ENCODE measurements at regions of chr6 and their contacts with region 1.

Region 1: GRCh38 chr6:25660512-25660911 is 8.5 kb downstream of the SCGN start:
- DNase-seq: peak; percentile 62
- H3K4me3 Mint-ChIP-seq: peak overlapping the region; percentile 39
- H3K27ac Mint-ChIP-seq: no peak overlapping the region
- H3K4me1 Mint-ChIP-seq: peaks cover 30% of the 10 kb centered on the region
- H3K27me3 Mint-ChIP-seq: no peaks in the 10 kb centered on the region
- CTCF ChIP-seq: no peak

Region 2: DNA sequence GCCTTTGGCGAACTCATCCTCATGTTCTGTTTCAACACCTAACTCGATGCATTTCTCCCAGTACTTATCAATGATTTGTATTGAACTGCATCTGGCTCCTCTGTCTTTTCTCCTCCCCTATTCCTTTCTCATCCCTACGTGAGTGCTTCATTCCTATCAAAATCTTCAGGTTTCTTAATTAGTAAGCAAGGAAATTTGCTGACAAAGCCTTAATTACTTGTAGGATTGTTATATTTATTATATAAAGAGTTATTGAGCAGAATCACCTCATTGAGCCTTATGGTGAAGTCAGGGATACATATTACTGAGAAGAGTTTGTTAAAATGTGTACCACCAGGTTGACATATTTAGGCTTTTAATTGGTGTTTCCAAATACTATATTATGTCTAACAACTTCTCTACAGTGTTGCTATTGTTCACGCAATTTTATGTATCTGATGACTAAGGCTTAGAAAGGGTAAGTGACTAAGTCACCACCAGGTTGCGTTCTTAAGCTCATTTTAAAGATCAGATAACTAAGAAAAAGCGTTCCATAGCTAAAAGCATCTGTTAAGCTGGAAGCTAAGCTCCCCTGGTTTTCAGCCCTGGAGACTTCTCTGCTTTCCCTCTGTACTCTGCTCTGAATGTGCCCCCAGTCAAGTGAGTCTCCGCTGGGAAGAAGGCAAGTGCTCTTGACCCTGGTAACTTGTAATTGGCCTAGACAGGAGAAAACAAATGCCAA is 10.4 kb after region 1 on chr6:
- CTCF ChIA-PET with region 1: interaction called, 10 read pairs
- intact Hi-C with region 1: no loop called
- DNase-seq: no peak
- H3K4me3 Mint-ChIP-seq: no peak overlapping the region
- H3K27ac Mint-ChIP-seq: no peak overlapping the region
- H3K4me1 Mint-ChIP-seq: peaks cover 20% of the 10 kb centered on the region
- H3K27me3 Mint-ChIP-seq: no peaks in the 10 kb centered on the region
- CTCF ChIP-seq: no peak

Region 3: GRCh38 chr6:25726122-25726911 is 65.8 kb after region 1 on chr6:
- CTCF ChIA-PET with region 1: no interaction called
- intact Hi-C with region 1: no loop called
- DNase-seq: no peak
- H3K4me3 Mint-ChIP-seq: no peak overlapping the region
- H3K27ac Mint-ChIP-seq: no peak overlapping the region
- H3K4me1 Mint-ChIP-seq: no peaks in the 10 kb centered on the region
- H3K27me3 Mint-ChIP-seq: no peaks in the 10 kb centered on the region
- CTCF ChIP-seq: no peak

Measured in Calu3 (cell line).